ENCODE measurements at regions of chr12 and their contacts with region 1.

Region 1: DNA sequence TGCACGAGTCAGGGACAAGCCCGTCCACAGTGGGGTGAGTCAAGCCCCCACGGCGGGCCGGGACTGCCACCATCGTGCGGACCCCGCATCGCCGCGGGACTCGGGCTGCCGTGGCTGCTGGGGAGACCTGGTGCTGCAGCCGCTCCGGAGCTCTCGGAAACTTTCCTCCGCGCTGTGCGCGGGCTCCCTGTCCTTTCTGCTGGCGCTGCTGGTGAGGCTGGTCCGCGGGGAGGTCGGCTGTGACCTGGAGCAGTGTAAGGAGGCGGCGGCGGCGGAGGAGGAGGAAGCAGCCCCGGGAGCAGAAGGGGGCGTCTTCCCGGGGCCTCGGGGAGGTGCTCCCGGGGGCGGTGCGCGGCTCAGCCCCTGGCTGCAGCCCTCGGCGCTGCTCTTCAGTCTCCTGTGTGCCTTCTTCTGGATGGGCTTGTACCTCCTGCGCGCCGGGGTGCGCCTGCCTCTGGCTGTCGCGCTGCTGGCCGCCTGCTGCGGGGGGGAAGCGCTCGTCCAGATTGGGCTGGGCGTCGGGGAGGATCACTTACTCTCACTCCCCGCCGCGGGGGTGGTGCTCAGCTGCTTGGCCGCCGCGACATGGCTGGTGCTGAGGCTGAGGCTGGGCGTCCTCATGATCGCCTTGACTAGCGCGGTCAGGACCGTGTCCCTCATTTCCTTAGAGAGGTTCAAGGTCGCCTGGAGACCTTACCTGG is 1.1 kb downstream of the PDE3A start:
- ATAC-seq: peak; percentile 43 to 75 (median 68)
- H3K4me3 ChIP-seq: peak overlapping the region; percentile 51 to 87 (median 76)
- H3K27ac ChIP-seq: peak overlapping the region; percentile 24 to 70
- H3K4me1 ChIP-seq: peaks cover 0 to 3% of the 10 kb centered on the region in 2 donors

Region 2: GRCh38 chr12:19946549-19946948 is 422.9 kb before region 1 on chr12:
- in situ Hi-C with region 1: loop called in 1 of 9 experiments (anchors 25 kb)
- ATAC-seq: peak in 6 of 8 experiments; percentile 21 to 95 (median 58)
- H3K4me3 ChIP-seq: no peak overlapping the region
- H3K27ac ChIP-seq: no peak overlapping the region
- H3K4me1 ChIP-seq: peaks cover 7 to 10% of the 10 kb centered on the region in 2 donors

Region 3: DNA sequence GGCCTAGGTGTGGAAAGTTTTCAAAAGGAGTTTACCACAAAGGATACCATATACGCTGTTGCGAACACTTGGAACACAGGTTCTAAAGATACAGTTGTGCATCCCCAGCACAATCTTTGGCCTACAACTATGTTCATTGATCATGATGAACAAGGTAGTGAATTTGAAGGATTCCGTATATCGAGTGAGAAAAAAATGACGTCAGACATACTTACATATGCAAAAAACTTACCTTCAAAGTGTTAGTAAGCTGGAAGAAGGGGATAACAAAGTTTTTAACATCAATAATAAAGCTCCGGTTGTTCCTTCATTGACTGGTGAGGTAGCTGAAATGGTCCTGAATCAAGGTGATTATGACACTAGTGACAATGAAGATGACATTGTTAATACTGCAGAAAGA is 135.0 kb before region 1 on chr12:
- in situ Hi-C with region 1: no loop called
- ATAC-seq: no peak
- H3K4me3 ChIP-seq: no peak overlapping the region
- H3K27ac ChIP-seq: no peak overlapping the region
- H3K4me1 ChIP-seq: no peaks in the 10 kb centered on the region